ENCODE measurements at regions of chr20 and their contacts with region 1.

Region 1: DNA sequence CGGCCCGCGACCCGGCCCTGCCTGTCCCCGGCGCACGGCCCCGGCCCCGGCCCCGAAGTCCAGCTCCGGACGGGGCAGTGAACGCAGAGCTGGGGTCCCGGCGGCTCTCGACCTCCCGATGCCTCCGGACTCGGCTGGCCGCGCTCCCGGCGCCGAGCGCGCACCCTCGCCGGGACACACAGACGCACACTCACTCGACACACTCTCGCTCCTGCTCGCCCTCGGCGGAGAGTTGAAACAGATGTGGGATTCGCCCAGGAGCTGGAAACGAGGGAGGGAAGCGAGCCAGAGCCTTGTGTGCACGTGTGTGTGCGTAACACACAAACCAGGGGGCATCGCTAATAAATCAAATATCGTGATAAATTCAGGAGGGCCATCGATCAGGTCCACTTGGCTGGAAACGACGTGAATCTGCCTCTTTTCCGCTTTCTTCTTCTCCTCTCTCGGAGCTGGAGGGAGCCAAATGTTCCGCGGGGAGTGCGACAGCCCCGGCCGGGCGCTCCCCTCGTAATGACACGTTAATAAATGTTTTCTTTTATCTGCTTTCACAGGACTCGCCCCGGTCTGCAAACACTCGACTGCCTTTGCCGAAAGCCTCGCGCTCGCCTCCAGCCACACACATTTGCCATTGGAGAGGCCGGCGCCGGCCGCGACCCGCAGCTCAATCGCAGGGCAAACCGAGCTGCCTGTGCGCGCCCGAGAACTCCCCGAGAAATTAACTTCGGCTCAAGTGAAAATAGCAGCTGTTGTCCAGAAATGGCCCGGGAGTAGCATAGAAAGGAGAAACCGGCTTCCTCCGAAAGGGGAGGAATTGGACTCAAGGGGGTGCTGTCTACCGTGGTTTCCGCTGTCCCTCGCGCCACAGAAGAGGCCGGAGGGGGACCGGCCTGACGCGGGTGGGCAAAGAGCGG is 828 bp upstream of the SULF2 start:
- DNase-seq: peak in 1 of 2 donors; percentile 82
- H3K4me3 ChIP-seq: peak overlapping the region; percentile 73 to 74
- H3K27ac ChIP-seq: peak overlapping the region; percentile 82 to 89
- H3K4me1 ChIP-seq: peaks cover 0 to 9% of the 10 kb centered on the region in 2 donors
- H3K27me3 ChIP-seq: no peaks in the 10 kb centered on the region
- CTCF ChIP-seq: peak; percentile 73 to 87 (median 77)

Region 2: GRCh38 chr20:47725248-47725973 is 60.7 kb before region 1 on chr20:
- intact Hi-C with region 1: loop called (anchors 5 kb)
- DNase-seq: peak in 1 of 2 donors; percentile 82
- H3K4me3 ChIP-seq: no peak overlapping the region
- H3K27ac ChIP-seq: no peak overlapping the region
- H3K4me1 ChIP-seq: peaks cover 0 to 8% of the 10 kb centered on the region in 2 donors
- H3K27me3 ChIP-seq: no peaks in the 10 kb centered on the region
- CTCF ChIP-seq: peak; percentile 67 to 88 (median 84)

Region 3: DNA sequence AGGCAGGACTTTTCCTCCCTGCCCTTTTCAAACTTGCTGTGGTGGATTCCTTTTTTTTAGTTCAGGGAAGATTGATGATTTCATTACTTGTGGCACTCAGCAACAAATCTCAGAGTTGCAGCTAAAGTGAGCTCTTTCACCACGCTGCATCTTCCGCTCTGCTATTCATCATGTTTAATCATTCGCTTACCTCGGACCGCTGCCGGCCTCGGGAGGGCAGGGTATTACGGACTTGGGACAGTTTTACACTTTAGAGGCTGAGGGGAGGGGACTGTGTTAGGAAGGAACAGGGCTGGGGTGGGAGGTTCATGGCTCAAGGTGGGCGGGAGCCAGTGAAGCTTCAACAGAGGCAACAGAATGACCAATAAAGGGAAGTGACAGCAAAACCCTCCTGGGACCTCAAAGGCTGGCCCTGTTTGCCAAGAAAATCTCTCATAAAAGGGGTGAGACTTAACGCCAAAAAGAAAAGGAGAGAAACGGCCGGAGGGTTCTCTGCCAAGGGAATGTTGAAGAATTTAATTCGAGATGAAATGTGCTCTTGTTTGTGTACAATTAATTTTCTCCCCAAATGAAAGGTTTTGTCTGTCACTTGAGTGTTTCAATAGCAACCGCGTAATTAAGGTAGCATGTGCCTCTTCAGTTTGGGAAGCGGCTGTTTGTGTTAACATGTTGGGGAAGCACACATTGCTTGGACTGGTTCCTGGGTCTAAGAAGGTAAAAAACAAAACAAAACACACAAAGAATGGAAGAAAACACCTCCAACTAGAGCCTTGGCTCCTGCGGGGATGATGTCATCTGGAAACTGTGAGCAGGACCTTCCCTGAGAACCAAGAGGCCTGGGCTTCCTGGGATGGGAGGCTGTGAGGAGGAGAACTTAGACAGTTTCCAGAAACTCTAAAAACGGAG is 71.7 kb after region 1 on chr20:
- intact Hi-C with region 1: loop called (anchors 2 kb)
- DNase-seq: peak in 1 of 2 donors; percentile 83
- H3K4me3 ChIP-seq: peak overlapping the region; percentile 11 to 41
- H3K27ac ChIP-seq: peak overlapping the region; percentile 70 to 78
- H3K4me1 ChIP-seq: peaks cover 4 to 8% of the 10 kb centered on the region in 2 donors
- H3K27me3 ChIP-seq: no peaks in the 10 kb centered on the region
- CTCF ChIP-seq: peak in 1 of 3 experiments; percentile 17

Region 4: DNA sequence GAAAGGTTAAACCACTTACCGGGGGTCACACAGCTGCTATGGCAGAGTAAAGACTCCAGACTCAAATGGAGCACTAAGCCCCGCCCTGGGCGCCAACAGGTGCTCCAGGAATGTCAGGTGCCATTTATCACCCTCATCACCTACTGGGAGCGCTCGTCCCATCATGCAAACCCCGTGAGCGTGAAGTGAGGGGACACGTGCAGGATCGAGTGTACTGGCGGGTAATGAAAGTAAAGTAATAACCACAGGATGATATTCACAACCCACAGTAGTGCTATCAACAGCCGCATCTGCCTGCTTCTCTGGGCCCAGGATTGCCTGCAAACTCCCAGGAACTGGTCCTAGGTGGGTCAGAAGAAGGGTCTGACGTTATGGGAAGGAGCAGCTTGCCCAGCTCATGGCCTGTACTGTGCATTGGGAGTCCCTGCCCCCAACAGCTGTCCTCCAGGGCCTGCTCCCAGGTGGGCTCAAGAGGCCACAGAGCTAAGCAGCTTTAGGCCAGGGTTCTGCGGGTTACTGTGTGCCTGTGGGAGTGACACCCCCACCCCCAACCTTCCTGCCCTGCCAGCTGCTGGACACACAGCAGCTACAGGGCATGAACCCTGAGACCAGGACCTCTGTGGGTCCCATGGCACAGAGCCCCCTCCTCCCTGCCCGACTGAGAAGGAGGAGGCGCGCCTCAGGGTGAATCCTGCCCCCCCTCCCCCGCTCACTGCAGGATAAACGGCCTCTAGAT is 119.7 kb after region 1 on chr20:
- intact Hi-C with region 1: no loop called
- DNase-seq: no peak
- H3K4me3 ChIP-seq: no peak overlapping the region
- H3K27ac ChIP-seq: no peak overlapping the region
- H3K4me1 ChIP-seq: no peaks in the 10 kb centered on the region
- H3K27me3 ChIP-seq: no peaks in the 10 kb centered on the region
- CTCF ChIP-seq: no peak

Region 5: GRCh38 chr20:48295445-48295963 is 509.4 kb after region 1 on chr20:
- intact Hi-C with region 1: loop called (anchors 2 kb)
- DNase-seq: no peak
- H3K4me3 ChIP-seq: no peak overlapping the region
- H3K27ac ChIP-seq: peak overlapping the region; percentile 45 to 75
- H3K4me1 ChIP-seq: peaks cover 4 to 22% of the 10 kb centered on the region in 2 donors
- H3K27me3 ChIP-seq: no peaks in the 10 kb centered on the region
- CTCF ChIP-seq: peak in 2 of 3 experiments; percentile 24 to 28

Region 6: DNA sequence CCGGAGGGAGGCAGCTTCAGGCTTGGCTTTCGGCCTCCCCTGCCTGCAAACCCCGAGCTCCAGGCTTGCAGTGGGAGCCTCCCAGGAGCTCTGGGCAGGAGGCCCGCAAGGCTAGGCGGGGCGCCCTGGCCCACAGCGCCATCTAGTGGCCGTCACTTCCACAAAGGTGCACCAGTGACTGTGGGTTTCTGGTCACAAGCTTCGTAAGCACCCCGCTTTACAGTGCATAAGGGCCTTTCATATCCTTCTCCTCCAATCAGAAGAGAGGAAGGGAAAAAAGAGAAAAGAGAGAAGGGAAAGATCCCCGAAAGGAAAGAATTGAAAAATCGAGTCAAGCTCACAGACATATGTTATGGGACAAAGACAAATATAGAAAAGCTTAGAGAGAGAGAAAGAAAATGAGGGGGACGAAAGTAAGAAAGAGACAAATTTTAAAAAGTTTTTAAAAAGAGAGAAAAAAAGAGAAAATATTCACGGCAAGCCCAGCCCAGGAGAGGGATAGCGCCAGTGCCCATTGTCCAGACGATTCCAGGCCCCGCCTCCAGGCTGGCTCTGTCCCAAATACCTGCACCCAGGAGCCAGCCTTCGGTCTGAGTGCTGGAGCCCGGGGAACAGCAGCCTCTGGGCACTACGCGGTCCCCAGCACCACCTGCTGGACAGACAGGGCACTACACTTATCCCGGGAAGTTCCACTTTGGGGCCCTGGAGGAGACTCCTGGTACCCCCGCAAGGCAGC is 834.6 kb after region 1 on chr20:
- intact Hi-C with region 1: loop called (anchors 1 kb)
- DNase-seq: peak in 1 of 2 donors; percentile 87
- H3K4me3 ChIP-seq: peak overlapping the region in 1 of 2 donors; percentile 59
- H3K27ac ChIP-seq: no peak overlapping the region
- H3K4me1 ChIP-seq: peaks cover 5 to 12% of the 10 kb centered on the region in 2 donors
- H3K27me3 ChIP-seq: no peaks in the 10 kb centered on the region
- CTCF ChIP-seq: peak; percentile 86 to 93 (median 93)

Region 7: DNA sequence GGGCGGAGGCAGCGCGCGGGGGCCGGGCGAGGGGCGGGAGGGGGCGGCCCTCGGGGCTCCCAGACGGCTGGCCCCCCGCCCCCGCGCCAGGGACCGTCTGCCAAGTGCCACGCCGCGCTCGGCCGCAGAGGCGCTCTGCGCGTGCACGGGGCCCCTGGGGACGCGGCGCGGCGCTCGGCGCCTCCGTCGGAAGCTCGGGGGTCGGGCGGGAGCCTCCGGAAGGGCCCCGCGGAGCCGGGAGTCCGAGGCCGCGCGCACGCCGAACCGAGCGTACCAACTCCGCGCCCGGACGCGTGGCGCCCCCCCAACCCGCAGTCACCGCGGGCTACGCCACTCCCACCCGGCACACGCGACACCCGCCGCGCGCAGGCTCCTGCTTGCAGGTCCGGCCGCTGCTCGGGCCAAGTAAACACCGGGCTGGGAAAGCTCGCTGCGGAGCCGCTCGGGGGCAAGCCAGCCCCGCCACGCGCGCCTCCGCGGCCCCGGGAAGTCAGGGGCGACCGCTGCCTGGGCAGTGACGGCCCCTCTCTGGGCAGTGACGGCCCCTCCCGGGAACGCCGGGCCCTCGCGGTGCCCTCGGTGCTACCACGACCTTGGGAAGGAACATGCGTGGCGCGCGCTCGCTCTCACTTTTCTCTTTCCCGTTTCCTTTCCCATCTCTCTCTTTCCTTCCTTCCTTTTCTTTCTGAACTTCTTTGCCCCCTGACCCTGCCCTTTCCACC is 1042.1 kb after region 1 on chr20:
- intact Hi-C with region 1: loop called (anchors 10 kb)
- DNase-seq: peak; percentile 50 to 88
- H3K4me3 ChIP-seq: peak overlapping the region; percentile 75 to 88
- H3K27ac ChIP-seq: peak overlapping the region; percentile 47 to 76
- H3K4me1 ChIP-seq: peaks cover 9 to 29% of the 10 kb centered on the region in 2 donors
- H3K27me3 ChIP-seq: no peaks in the 10 kb centered on the region
- CTCF ChIP-seq: peak in 1 of 3 experiments; percentile 62